Activated CD4-positive, alpha-beta T cell treated with anti-CD3 and anti-CD28 coated beads for 36 hours (primary cell): ENCODE measurements at regions of chr5 and their contacts with region 1.

Region 1: DNA sequence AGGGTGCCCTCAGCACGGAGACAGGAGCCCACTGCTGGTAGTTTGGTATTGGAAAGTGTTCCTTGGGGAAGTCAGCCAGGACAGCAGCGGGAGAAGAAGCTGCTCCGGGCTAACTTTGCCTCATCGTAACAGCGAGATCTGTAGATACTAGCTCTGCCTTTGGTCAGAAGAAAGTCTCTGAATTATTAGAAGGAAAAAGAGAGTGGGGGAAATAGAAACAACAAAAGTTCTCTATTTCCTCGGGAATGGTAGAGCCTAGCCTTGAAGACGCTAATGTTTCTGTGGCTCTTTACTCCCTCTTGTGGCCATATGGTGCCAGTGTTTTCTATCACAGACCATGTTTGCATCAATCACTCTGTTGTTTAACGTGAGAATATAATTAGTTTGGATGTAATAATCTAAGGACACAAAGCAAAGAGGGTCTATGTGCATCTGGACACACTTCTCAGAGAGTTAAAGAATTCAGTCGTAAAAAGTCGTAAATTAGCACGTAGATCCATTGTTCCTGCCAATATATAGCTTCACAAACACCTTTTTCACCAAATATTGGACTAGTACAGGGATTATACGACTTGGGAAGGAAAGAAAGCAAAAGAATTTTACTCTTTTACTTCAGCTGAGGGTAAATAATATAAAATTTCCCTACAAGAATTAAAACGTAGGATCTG is 40.2 kb upstream of the HSD17B4 start:
- DNase-seq: peak; percentile 66
- ATAC-seq: peak; percentile 78
- H3K4me3 Mint-ChIP-seq: peak overlapping the region; percentile 78
- H3K27ac Mint-ChIP-seq: peak overlapping the region; percentile 93
- H3K4me1 Mint-ChIP-seq: peaks cover 35% of the 10 kb centered on the region
- H3K27me3 Mint-ChIP-seq: no peaks in the 10 kb centered on the region

Region 2: GRCh38 chr5:119070828-119071572 is 341.1 kb before region 1 on chr5 and contains the start of gene DMXL1:
- CTCF ChIA-PET with region 1: interaction called, 21 read pairs
- POLR2A ChIA-PET with region 1: no interaction called
- intact Hi-C with region 1: loop called (anchors 1 to 5 kb)
- DNase-seq: peak; percentile 99
- ATAC-seq: peak; percentile 87
- H3K4me3 Mint-ChIP-seq: peak within 1 kb of the TSS; percentile 92
- H3K27ac Mint-ChIP-seq: peak within 1 kb of the TSS; percentile 96
- H3K4me1 Mint-ChIP-seq: peaks cover 35% of the 10 kb centered on the region
- H3K27me3 Mint-ChIP-seq: no peaks in the 10 kb centered on the region
- total RNA-seq, gene DMXL1: 23.5 to 31.1 TPM

Region 3: DNA sequence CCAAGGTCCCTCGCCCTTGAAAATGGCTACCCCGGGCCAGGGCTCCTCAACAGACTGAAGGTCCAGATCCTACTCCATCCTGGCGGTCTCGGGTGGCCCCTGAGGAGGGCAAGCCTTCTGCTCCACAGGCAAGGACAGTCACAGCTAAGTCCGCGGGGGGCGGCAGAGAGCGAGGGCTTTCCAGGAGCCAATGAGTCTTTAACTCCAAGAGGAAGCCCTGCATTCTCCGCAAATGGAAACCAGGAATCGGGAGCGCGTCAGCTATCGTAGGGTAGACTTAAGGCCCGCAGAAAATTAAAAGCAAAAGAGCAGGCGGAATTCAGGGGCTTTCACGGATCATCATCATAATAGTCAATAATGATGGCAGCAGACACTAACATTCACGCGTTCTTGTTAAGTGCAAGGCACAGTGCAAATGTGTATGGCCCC is 144.1 kb before region 1 on chr5:
- CTCF ChIA-PET with region 1: interaction called, 19 read pairs
- POLR2A ChIA-PET with region 1: interaction called, 7 read pairs
- intact Hi-C with region 1: loop called in 1 of 2 experiments (anchors 1 kb)
- DNase-seq: peak; percentile 93
- ATAC-seq: peak; percentile 75
- H3K4me3 Mint-ChIP-seq: peak overlapping the region; percentile 96
- H3K27ac Mint-ChIP-seq: peak overlapping the region; percentile 96
- H3K4me1 Mint-ChIP-seq: peaks cover 63% of the 10 kb centered on the region
- H3K27me3 Mint-ChIP-seq: no peaks in the 10 kb centered on the region

Region 4: DNA sequence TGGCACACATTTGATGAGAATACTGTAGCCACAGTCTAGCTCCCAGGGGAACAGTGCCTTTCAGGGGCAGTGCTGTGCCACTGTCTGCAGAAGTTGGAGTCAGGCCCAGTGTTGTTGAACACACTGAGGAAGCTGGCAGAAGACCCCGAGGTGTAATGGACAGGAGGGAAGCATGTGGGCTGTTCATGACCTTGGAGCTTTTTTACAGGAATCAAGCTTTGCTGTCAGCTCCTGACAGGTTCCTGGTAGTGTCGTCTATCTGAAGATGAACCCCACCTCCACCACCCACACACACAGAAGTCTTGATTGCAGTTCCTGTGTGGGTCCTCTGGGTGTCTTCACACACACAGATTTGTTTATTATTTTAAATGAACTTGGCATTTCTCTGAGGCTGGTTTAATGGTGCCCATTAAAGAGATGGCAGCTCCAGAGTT is 96.5 kb before region 1 on chr5:
- CTCF ChIA-PET with region 1: interaction called, 18 read pairs
- POLR2A ChIA-PET with region 1: no interaction called
- intact Hi-C with region 1: loop called (anchors 1 to 2 kb)
- DNase-seq: peak; percentile 78
- ATAC-seq: peak; percentile 77
- H3K4me3 Mint-ChIP-seq: peak overlapping the region; percentile 28
- H3K27ac Mint-ChIP-seq: peak overlapping the region; percentile 91
- H3K4me1 Mint-ChIP-seq: peaks cover 91% of the 10 kb centered on the region
- H3K27me3 Mint-ChIP-seq: no peaks in the 10 kb centered on the region

Region 5: GRCh38 chr5:119340597-119341218 is 71.4 kb before region 1 on chr5:
- CTCF ChIA-PET with region 1: interaction called, 16 read pairs
- POLR2A ChIA-PET with region 1: no interaction called
- intact Hi-C with region 1: no loop called
- DNase-seq: peak; percentile 71
- ATAC-seq: peak; percentile 14
- H3K4me3 Mint-ChIP-seq: peak overlapping the region; percentile 71
- H3K27ac Mint-ChIP-seq: peak overlapping the region; percentile 96
- H3K4me1 Mint-ChIP-seq: peaks cover 98% of the 10 kb centered on the region
- H3K27me3 Mint-ChIP-seq: no peaks in the 10 kb centered on the region

Region 6: DNA sequence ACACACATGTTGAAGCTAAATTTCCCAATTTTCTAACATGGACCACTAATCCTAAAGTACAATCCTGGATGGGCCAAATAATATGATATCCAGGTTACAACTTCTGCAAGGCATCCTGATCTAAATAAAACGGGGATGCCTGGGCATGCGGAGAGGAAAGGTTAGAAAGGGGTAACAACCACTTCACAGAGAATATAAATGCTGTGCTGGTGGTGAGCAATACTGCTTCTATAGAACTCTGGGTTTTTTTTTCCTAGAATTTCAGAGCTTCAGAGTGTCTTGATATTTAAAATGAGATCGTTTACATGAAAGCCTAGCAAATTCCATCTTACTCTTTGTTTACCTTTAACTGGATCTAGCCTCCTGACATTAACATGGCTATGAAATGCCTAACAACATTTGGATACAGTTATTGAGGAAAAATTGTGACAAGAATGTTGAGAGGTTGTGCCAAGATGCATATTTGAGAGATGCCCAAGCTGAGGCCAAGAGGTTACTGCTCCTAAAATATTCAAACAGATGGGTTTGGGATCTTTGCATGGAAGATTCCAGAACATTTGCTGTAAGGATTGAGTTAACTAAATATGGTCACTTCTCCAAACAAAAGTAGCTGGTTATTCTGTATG is 33.9 kb before region 1 on chr5:
- CTCF ChIA-PET with region 1: interaction called, 20 read pairs
- POLR2A ChIA-PET with region 1: interaction called, 5 read pairs
- intact Hi-C with region 1: no loop called
- DNase-seq: no peak
- ATAC-seq: peak; percentile 28
- H3K4me3 Mint-ChIP-seq: no peak overlapping the region
- H3K27ac Mint-ChIP-seq: peak overlapping the region; percentile 82
- H3K4me1 Mint-ChIP-seq: peaks cover 74% of the 10 kb centered on the region
- H3K27me3 Mint-ChIP-seq: no peaks in the 10 kb centered on the region

Region 7: GRCh38 chr5:119435436-119436132 is 23.5 kb after region 1 on chr5:
- CTCF ChIA-PET with region 1: interaction called, 11 read pairs
- POLR2A ChIA-PET with region 1: no interaction called
- intact Hi-C with region 1: no loop called
- DNase-seq: peak; percentile 86
- ATAC-seq: peak; percentile 83
- H3K4me3 Mint-ChIP-seq: no peak overlapping the region
- H3K27ac Mint-ChIP-seq: no peak overlapping the region
- H3K4me1 Mint-ChIP-seq: peaks cover 8% of the 10 kb centered on the region
- H3K27me3 Mint-ChIP-seq: peaks cover 21% of the 10 kb centered on the region

Region 8: DNA sequence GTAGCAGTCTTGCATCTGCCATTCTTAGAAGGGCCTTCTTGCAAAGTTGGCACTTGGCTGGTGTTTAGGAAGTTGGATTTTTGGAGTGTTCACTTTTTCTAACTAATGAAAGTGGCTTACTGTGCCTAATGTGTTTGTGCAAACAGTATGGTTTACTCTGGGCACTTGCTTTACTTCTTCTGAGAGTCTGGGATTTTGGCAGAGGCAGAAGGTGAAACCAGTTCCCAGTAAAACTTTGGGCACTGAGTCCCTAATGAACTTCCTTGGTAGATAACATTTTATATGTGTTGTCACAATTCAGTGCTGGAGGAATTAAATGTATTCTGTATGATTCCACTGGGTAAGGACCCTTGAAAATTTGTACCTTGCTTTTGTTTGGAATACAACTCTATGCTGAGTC is 373.0 kb after region 1 on chr5:
- CTCF ChIA-PET with region 1: no interaction called
- POLR2A ChIA-PET with region 1: no interaction called
- intact Hi-C with region 1: no loop called
- DNase-seq: no peak
- ATAC-seq: no peak
- H3K4me3 Mint-ChIP-seq: no peak overlapping the region
- H3K27ac Mint-ChIP-seq: no peak overlapping the region
- H3K4me1 Mint-ChIP-seq: no peaks in the 10 kb centered on the region
- H3K27me3 Mint-ChIP-seq: no peaks in the 10 kb centered on the region